ENCODE measurements at regions of chr6 and their contacts with region 1.

Region 1: GRCh38 chr6:24607310-24608105 is 38.5 kb downstream of the KIAA0319 start:
- DNase-seq: no peak
- H3K4me3 ChIP-seq: no peak overlapping the region
- H3K27ac ChIP-seq: no peak overlapping the region
- H3K4me1 ChIP-seq: no peaks in the 10 kb centered on the region
- H3K27me3 ChIP-seq: no peaks in the 10 kb centered on the region
- CTCF ChIP-seq: no peak
- POLR2A ChIP-seq: no peak

Region 2: DNA sequence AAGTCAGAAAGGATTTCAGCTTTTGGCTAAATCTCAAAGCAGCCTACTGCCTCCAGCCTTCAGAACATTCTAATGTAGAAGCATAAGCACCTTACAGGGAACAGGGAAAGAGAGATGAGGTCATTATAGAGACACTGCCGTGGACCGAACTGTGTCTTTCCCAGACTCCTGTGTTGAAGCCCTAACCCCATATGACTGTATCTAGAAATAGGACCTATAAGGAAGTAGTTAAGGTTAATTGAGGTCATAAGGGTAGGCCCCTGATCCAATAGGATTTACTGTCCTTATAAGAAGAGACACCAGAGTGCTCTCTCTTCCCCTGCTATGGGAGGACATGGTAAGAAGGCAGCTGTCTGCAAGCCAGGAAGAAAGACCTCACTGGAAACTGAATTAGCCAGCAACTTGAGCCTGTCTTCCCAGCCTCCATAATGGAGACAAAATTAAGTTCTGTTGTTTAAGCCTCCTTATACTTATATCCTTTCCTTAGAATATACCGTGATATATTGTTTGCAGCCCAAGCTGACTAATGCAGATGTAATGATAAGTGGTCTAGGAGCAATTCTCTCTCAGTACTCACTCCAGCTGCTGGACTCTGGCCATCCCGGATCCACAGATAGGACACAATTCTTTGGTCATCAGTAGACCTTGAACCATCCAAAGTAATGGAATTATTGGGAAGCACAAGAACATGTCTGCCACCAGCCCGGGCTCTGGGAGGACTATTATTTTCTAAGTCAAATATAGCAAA is 41.3 kb before region 1 on chr6:
- intact Hi-C with region 1: loop called (anchors 2 kb)
- DNase-seq: no peak
- H3K4me3 ChIP-seq: no peak overlapping the region
- H3K27ac ChIP-seq: no peak overlapping the region
- H3K4me1 ChIP-seq: no peaks in the 10 kb centered on the region
- H3K27me3 ChIP-seq: no peaks in the 10 kb centered on the region
- CTCF ChIP-seq: no peak
- POLR2A ChIP-seq: no peak

Measured in breast epithelium (tissue), 4 donors.